Endothelial cell of umbilical vein (primary cell): ENCODE measurements at regions of chr4 and their contacts with region 1.

Region 1: GRCh38 chr4:16264798-16265197 is 38.5 kb upstream of the TAPT1 start:
- DNase-seq: peak; percentile 58
- H3K4me3 ChIP-seq: no peak overlapping the region
- H3K27ac ChIP-seq: no peak overlapping the region
- H3K4me1 ChIP-seq: no peaks in the 10 kb centered on the region
- H3K27me3 ChIP-seq: peaks cover 0 to 9% of the 10 kb centered on the region in 2 experiments
- CTCF ChIP-seq: peak; percentile 20 to 21
- POLR2A ChIP-seq: no peak

Region 2: DNA sequence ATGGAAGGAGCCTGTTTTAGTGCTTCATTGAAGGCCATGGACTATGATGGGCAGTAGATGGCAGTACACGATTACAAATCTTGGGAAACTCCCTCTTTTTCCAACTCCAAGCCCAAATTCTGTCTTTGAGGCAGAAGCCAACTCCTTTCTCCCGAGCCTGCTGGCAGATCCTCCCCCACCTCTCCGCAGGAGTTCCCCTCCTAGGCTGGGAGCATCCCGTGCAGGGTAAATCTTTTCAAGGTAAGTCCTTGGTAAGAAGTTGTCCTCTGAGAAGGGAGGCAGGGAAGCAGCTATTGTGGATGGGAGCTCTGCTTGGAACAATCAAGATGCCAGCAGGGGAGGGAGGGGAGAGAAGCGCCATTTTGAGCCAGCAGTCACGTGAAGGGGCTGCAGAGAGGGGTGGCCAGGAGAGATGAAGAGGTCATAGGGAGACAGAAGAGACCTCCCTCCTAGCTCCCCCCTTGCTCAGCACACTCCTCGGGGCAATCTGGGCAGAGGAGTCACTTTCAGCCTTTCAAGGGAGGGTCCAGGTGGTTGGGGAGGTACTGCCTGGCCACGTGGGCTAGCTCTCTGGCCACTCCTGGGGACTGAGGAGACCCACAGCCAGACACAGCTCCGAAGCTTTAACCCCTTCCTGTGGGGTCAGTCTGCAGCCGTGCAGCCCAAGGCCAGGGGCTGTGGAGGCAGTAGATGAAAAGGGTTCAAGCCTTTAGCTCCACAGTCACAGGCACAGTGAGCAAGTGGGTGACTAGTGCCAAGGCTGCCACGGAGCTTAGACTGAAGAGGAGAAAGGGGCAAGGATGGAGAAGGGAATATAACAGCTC is 785.5 kb before region 1 on chr4:
- CTCF ChIA-PET with region 1: interaction called, 9 read pairs
- POLR2A ChIA-PET with region 1: no interaction called
- dilution Hi-C with region 1: no loop called
- intact Hi-C with region 1: loop called (anchors 10 kb)
- DNase-seq: peak; percentile 89
- H3K4me3 ChIP-seq: peak overlapping the region; percentile 24 to 81 (median 44)
- H3K27ac ChIP-seq: peak overlapping the region; percentile 66
- H3K4me1 ChIP-seq: peaks cover 10% of the 10 kb centered on the region
- H3K27me3 ChIP-seq: no peaks in the 10 kb centered on the region
- CTCF ChIP-seq: peak; percentile 71 to 73
- POLR2A ChIP-seq: no peak

Region 3: DNA sequence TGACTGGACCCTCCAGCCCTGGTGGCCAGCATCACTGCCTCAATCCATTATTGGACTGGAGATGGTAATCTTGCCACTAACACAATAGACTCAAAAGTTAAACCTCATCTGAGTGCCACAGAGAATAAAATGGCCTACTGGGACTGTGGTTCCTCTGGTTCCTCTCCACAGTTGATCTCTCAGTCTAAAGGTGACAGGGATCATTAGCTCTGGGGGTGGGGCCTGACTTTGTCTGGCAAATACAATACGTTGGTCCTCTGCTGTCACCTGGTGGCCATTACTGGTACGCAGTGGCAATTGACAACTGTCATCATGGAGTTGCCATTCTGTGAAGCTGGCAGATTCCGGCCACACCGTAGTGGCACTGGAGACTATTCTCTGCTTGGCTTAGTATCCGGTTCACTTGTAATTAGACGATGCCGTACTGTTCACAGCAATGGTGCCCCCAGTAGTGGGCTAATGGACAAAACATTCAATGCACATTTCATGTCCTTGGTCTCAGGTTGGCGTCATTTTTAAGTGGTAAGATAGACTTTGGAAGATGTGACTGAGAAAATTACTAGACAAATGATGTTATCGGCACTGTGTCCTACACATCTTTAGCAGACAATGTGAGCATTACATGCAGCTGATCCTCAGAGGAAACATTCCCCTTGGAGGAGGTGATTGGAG is 308.5 kb before region 1 on chr4:
- CTCF ChIA-PET with region 1: interaction called, 58 read pairs
- POLR2A ChIA-PET with region 1: no interaction called
- dilution Hi-C with region 1: no loop called
- intact Hi-C with region 1: no loop called
- DNase-seq: peak; percentile 69
- H3K4me3 ChIP-seq: no peak overlapping the region
- H3K27ac ChIP-seq: no peak overlapping the region
- H3K4me1 ChIP-seq: no peaks in the 10 kb centered on the region
- H3K27me3 ChIP-seq: no peaks in the 10 kb centered on the region
- CTCF ChIP-seq: peak; percentile 75 to 84
- POLR2A ChIP-seq: no peak

Region 4: GRCh38 chr4:15976456-15977447 is 288.0 kb before region 1 on chr4:
- CTCF ChIA-PET with region 1: interaction called, 11 read pairs
- POLR2A ChIA-PET with region 1: no interaction called
- dilution Hi-C with region 1: no loop called
- intact Hi-C with region 1: no loop called
- DNase-seq: no peak
- H3K4me3 ChIP-seq: no peak overlapping the region
- H3K27ac ChIP-seq: no peak overlapping the region
- H3K4me1 ChIP-seq: no peaks in the 10 kb centered on the region
- H3K27me3 ChIP-seq: peaks cover 0 to 4% of the 10 kb centered on the region in 2 experiments
- CTCF ChIP-seq: peak in 1 of 2 donors; percentile 1
- POLR2A ChIP-seq: no peak

Region 5: DNA sequence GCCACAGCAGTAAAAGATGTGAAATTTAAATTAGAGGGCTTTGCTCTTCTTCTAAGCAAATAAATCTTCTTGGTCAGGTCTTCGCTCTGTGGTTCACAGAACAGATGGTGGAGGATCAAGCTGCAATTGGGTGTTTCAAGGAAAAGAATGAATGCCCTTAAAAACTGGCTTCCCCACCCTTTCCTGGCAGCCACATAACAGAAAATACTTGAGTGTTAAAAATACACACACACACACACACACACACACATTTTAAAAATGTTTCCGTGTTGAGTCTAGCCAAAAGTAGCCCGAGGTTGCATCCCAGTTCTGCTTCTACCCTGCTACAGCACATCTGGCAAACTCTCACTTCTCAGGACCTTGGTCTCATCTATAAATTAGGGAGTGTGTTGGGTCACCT is 245.1 kb before region 1 on chr4:
- CTCF ChIA-PET with region 1: interaction called, 22 read pairs
- POLR2A ChIA-PET with region 1: no interaction called
- dilution Hi-C with region 1: no loop called
- intact Hi-C with region 1: no loop called
- DNase-seq: no peak
- H3K4me3 ChIP-seq: no peak overlapping the region
- H3K27ac ChIP-seq: no peak overlapping the region
- H3K4me1 ChIP-seq: peaks cover 3% of the 10 kb centered on the region
- H3K27me3 ChIP-seq: peaks cover 5 to 11% of the 10 kb centered on the region in 2 experiments
- CTCF ChIP-seq: no peak
- POLR2A ChIP-seq: no peak

Region 6: DNA sequence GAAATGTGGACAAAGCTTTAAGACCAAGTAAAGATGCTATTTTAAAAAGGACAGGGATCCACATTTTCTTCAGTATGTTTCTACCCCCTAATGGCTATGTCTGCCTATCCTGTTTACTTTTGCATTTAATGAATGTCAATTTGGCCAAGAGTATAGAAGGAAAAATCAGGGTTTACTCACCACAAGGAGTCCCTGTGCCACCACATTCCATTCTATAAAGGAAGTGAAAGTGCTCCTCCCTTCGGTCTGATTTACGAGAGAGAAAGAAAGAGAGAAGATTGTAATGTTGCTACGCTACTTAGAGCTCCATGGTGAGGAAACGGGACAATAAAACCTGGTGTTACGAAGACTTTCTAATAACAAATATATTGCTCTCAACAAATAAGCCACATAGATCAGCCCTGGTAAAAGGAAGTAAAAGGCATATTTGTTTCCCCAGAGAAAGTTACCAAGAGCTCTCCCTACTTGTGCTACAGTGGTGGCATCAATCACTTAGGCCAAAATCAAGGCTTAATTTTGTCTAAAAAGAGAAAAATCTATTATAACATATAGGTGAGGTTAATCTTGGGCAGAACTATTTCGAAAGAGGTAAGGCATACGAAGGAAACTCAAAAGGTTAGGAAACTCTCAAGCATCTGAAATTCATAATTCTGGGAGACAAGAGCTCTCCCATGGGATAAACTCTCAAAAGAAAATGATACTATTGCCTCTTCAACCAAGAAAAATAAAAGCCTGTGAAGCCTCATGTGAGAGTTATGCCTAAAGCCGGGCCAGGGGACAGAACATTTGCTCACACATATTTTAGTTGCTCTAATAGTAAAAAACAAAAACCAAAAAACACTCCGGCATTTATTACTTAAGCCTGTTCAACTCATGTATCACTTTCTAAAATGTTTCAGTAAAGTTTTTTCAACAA is 68.1 kb before region 1 on chr4:
- CTCF ChIA-PET with region 1: interaction called, 46 read pairs
- POLR2A ChIA-PET with region 1: no interaction called
- dilution Hi-C with region 1: no loop called
- intact Hi-C with region 1: loop called (anchors 1 kb)
- DNase-seq: peak; percentile 83
- H3K4me3 ChIP-seq: peak overlapping the region in 2 of 3 experiments; percentile 34 to 67
- H3K27ac ChIP-seq: peak overlapping the region; percentile 68
- H3K4me1 ChIP-seq: peaks cover 27% of the 10 kb centered on the region
- H3K27me3 ChIP-seq: no peaks in the 10 kb centered on the region
- CTCF ChIP-seq: peak; percentile 28 to 32
- POLR2A ChIP-seq: no peak

Region 7: GRCh38 chr4:16250665-16251365 is 14.0 kb before region 1 on chr4:
- CTCF ChIA-PET with region 1: interaction called, 13 read pairs
- POLR2A ChIA-PET with region 1: no interaction called
- dilution Hi-C with region 1: no loop called
- intact Hi-C with region 1: no loop called
- DNase-seq: no peak
- H3K4me3 ChIP-seq: no peak overlapping the region
- H3K27ac ChIP-seq: no peak overlapping the region
- H3K4me1 ChIP-seq: no peaks in the 10 kb centered on the region
- H3K27me3 ChIP-seq: no peaks in the 10 kb centered on the region
- CTCF ChIP-seq: no peak
- POLR2A ChIP-seq: no peak